MCF 10A (cell line): ENCODE measurements at regions of chr3 and their contacts with region 1.

Region 1: DNA sequence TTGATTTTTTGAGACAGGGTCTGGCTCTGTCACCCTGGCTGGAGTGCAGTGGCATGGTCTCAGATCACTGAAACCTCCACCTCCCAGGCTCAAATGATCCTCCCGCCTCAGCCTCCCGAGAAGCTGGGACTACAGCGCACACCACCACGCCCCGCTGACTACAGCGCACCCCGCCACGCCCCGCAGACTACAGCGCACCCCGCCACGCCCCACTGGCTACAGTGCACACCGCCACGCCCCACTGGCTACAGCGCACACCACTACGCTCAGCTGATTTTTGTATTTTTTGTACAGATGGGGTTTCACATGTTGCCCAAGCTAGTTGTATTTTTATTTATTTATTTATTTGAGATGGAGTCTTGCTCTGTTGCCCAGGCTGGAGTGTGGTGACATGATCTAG is 35.6 kb downstream of the SLC51A start:
- DNase-seq: no peak
- H3K4me3 Mint-ChIP-seq: no peak overlapping the region
- H3K27ac Mint-ChIP-seq: no peak overlapping the region
- H3K4me1 Mint-ChIP-seq: no peaks in the 10 kb centered on the region
- H3K27me3 Mint-ChIP-seq: no peaks in the 10 kb centered on the region
- CTCF ChIP-seq: no peak

Region 2: DNA sequence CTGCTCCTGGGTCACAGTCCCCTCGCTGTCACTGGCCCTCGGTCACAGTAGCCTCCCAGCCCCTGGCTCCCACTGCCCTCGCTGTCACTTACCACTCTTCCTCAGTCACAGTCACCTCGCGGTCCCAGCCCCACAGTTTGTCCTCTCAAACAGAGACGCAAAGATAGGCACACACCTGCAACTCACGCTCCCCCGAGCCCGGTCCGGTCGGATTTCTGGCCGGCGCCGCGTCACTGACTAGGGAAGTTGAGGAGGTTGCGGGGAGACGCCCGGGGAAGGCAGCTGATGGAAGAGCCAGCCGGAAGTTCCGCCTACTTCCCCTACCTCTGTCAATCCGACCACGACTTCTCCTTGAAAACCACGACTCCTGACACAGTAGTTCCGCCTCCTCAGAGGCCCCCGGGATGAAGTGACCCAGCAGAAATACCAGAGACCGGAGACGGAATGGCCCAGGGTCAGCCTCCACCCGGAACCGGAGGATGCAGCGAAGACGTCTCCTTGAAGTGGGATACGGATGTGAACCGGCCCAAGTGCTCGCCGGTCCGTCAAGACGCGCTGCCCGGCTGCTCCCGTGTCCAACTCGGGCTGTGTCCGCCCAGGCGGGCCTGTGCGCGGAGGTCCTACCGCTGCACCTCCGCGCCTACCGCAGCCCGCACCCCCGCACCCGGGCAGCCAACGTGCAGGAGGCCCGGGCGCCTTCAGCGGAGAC is 35.7 kb after region 1 on chr3 and contains the start of gene PCYT1A:
- CTCF ChIA-PET with region 1: interaction called, 3 read pairs
- POLR2A ChIA-PET with region 1: interaction called, 11 read pairs
- intact Hi-C with region 1: no loop called
- DNase-seq: peak; percentile 96
- H3K4me3 Mint-ChIP-seq: peak within 1 kb of the TSS; percentile 100
- H3K27ac Mint-ChIP-seq: peak within 1 kb of the TSS; percentile 99
- H3K4me1 Mint-ChIP-seq: peaks cover 26% of the 10 kb centered on the region
- H3K27me3 Mint-ChIP-seq: no peaks in the 10 kb centered on the region
- CTCF ChIP-seq: no peak
- total RNA-seq, gene PCYT1A: 64.5 and 78.1 TPM in 2 replicates

Region 3: DNA sequence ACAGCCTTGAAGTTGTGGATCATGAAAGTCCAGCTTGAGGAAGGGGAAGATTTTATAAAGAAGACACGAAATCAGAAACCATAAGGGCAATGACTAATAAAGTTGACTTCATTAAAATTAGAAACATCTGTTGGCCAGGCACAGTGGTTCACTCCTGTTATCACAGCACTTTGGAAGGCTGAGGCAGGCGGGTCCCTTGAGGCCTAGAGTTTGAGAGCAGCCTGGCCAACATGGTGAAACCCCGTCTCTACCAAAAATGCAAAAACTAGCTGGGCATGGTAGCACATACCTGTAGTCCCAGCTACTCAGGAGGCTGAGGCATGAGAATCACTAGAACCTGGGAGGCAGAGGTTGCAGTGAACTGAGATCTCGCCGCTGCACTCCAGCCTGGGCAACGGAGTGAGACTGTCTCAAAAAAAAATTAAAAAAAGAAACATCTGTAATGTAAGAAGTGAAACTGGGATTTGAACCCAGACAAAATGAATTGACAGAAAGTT is 188.2 kb after region 1 on chr3:
- CTCF ChIA-PET with region 1: interaction called, 4 read pairs
- POLR2A ChIA-PET with region 1: no interaction called
- intact Hi-C with region 1: loop called (anchors 1 kb)
- DNase-seq: no peak
- H3K4me3 Mint-ChIP-seq: no peak overlapping the region
- H3K27ac Mint-ChIP-seq: no peak overlapping the region
- H3K4me1 Mint-ChIP-seq: peaks cover 5% of the 10 kb centered on the region
- H3K27me3 Mint-ChIP-seq: no peaks in the 10 kb centered on the region
- CTCF ChIP-seq: no peak

Region 4: GRCh38 chr3:196518966-196519717 is 267.2 kb after region 1 on chr3:
- CTCF ChIA-PET with region 1: interaction called, 19 read pairs
- POLR2A ChIA-PET with region 1: no interaction called
- intact Hi-C with region 1: loop called (anchors 1 kb)
- DNase-seq: peak; percentile 82
- H3K4me3 Mint-ChIP-seq: no peak overlapping the region
- H3K27ac Mint-ChIP-seq: no peak overlapping the region
- H3K4me1 Mint-ChIP-seq: no peaks in the 10 kb centered on the region
- H3K27me3 Mint-ChIP-seq: no peaks in the 10 kb centered on the region
- CTCF ChIP-seq: peak; percentile 65